Activated CD4-positive, alpha-beta memory T cell treated with anti-CD3 and anti-CD28 coated beads for 36 hours (primary cell): ENCODE measurements at regions of chr6 and their contacts with region 1.

Region 1: DNA sequence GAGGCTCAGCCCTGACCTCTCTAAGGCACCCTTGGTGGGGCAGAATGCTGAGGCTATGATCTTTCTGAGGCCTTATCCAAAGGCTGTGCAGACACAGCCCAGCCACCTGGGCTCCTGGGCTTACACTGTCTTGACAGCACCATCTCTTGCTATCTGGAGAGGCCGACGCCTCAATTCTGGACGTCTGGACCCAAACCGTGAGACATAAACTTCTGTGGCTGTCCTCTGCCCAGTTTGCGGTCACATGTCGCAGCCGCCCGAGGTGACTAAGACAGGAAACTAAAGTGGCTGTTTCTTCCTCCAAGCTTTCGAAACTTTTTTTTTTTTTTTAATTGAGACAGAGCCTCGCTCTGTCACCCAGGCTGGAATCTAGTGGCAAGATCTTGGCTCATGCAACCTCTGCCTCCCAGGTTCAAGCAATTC is 49.3 kb downstream of the PRR18 start:
- DNase-seq: peak; percentile 68
- H3K4me3 Mint-ChIP-seq: peak overlapping the region; percentile 38
- H3K27ac Mint-ChIP-seq: peak overlapping the region; percentile 59
- H3K4me1 Mint-ChIP-seq: peaks cover 32% of the 10 kb centered on the region
- H3K27me3 Mint-ChIP-seq: peaks cover 18% of the 10 kb centered on the region

Region 2: DNA sequence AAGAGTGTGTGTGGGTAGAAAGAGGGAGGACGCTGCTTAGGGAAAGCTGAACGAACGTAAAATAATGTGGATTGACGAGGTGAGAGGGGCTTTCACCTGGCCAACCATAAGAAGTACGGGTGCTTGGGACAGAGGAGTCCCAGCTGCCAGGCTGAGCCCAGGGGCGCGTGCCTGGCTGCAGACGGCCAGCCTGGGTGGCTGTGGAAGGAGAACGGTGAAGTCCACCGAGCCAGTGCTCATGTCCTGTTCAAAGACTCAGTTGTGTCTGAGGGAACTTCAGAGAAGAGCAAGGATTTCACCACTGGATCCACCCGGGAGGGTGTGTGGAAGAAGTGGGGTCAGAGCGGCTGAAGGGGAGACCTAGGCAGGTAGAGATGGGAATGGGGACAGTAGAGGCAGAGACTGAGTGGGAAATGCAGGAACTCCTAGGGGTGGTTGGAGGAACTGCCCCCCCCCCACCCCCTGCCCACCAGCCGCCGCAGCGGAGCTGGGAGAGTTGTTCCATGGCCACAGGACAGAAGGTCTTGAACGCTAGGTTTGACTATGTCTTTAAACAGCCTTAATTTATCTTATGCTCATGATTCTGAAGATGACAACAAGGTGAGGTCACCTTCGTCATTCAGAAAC is 23.1 kb before region 1 on chr6:
- CTCF ChIA-PET with region 1: interaction called, 4 read pairs
- POLR2A ChIA-PET with region 1: no interaction called
- intact Hi-C with region 1: loop called (anchors 2 kb)
- DNase-seq: no peak
- H3K4me3 Mint-ChIP-seq: no peak overlapping the region
- H3K27ac Mint-ChIP-seq: no peak overlapping the region
- H3K4me1 Mint-ChIP-seq: peaks cover 10% of the 10 kb centered on the region
- H3K27me3 Mint-ChIP-seq: peaks cover 12% of the 10 kb centered on the region

Region 3: GRCh38 chr6:166244353-166245045 is 14.4 kb before region 1 on chr6:
- CTCF ChIA-PET with region 1: no interaction called
- POLR2A ChIA-PET with region 1: no interaction called
- intact Hi-C with region 1: loop called (anchors 1 kb)
- DNase-seq: peak; percentile 62
- H3K4me3 Mint-ChIP-seq: peak overlapping the region; percentile 56
- H3K27ac Mint-ChIP-seq: peak overlapping the region; percentile 32
- H3K4me1 Mint-ChIP-seq: peaks cover 22% of the 10 kb centered on the region
- H3K27me3 Mint-ChIP-seq: peaks cover 3% of the 10 kb centered on the region

Region 4: DNA sequence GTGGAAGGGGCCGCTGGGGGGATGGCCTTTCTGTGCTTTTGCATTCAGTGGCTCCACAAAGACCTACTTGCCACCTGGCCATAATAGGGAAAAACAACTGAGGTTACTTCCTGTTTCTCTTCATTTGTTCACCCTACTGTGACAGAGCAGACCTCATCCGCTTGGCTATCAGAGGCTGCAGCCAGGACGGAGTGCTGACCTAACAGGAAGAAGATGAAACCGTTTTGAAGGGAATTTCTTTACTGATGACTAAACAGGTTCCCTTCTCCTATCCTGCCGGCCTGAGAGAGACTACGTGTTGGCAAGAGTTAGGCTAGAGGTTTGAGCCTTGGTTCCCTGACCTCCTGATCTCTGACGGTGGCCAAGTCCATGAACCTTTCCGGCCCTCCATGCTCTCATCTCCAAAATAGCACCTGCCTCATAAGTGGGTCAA is 28.0 kb after region 1 on chr6:
- CTCF ChIA-PET with region 1: no interaction called
- POLR2A ChIA-PET with region 1: no interaction called
- intact Hi-C with region 1: loop called (anchors 2 kb)
- DNase-seq: no peak
- H3K4me3 Mint-ChIP-seq: no peak overlapping the region
- H3K27ac Mint-ChIP-seq: no peak overlapping the region
- H3K4me1 Mint-ChIP-seq: no peaks in the 10 kb centered on the region
- H3K27me3 Mint-ChIP-seq: peaks cover 6% of the 10 kb centered on the region